Activated naive CD4-positive, alpha-beta T cell treated with anti-CD3 and anti-CD28 coated beads for 36 hours (primary cell): ENCODE measurements at regions of chrX and their contacts with region 1.

Region 1: DNA sequence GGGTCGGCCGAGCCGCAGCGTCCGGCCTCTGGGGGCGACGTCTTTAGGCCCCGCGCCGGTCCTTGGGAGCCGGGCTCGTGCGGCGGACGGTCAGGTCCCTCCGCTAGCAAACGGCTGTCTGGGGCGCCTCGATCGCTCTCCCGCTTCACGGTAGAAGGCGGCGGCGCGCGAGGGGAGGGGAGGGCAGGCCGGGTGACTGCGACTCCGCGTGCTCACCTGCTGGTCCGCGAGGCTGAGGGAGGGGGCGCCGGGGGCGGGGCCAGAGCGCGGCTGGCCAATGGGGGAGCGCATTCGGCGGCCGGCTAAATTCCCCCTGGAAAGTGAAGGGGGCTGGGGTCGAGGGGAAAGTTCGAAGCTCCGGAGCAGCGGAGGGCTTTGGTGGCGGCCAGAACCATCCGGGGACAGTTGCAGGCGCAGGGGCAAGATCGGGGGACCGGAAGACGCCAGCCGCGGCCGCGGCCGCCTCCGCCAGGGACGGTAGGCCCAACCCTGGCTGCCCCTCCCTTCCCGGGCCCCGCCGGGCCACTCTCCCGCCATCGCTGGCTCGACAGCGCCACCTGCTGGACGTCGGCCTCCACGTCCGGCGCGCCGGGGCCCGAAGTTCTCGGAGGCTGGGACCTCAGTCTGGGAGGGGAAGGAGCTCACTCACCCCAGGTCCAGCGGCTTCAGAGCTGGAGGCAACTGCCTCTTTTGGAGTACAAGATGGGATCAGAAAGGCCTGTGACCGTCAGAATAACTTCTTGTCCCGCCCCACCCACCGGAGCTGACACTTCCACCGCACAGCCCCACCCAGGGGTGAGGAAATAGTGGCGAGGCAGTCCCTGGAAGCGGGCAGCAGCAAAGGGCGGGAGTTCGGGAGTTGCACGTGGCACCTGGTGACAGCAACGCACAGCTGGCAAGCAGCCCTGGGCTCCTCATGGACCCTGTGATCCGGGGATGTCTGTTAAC is 49.9 kb downstream of the ELF4 start:
- DNase-seq: peak; percentile 83
- H3K4me3 Mint-ChIP-seq: peak overlapping the region; percentile 71
- H3K27ac Mint-ChIP-seq: no peak overlapping the region
- H3K4me1 Mint-ChIP-seq: no peaks in the 10 kb centered on the region
- H3K27me3 Mint-ChIP-seq: no peaks in the 10 kb centered on the region

Region 2: GRCh38 chrX:129637217-129638109 is 422.9 kb before region 1 on chrX:
- CTCF ChIA-PET with region 1: interaction called, 7 read pairs
- intact Hi-C with region 1: loop called (anchors 1 kb)
- DNase-seq: peak; percentile 86
- H3K4me3 Mint-ChIP-seq: no peak overlapping the region
- H3K27ac Mint-ChIP-seq: no peak overlapping the region
- H3K4me1 Mint-ChIP-seq: peaks cover 1% of the 10 kb centered on the region
- H3K27me3 Mint-ChIP-seq: no peaks in the 10 kb centered on the region

Region 3: GRCh38 chrX:129925305-129926092 is 134.9 kb before region 1 on chrX:
- CTCF ChIA-PET with region 1: interaction called, 19 read pairs
- intact Hi-C with region 1: loop called (anchors 1 kb)
- DNase-seq: peak; percentile 81
- H3K4me3 Mint-ChIP-seq: no peak overlapping the region
- H3K27ac Mint-ChIP-seq: no peak overlapping the region
- H3K4me1 Mint-ChIP-seq: peaks cover 3% of the 10 kb centered on the region
- H3K27me3 Mint-ChIP-seq: no peaks in the 10 kb centered on the region